ENCODE measurements at regions of chr2 and their contacts with region 1.

Region 1: DNA sequence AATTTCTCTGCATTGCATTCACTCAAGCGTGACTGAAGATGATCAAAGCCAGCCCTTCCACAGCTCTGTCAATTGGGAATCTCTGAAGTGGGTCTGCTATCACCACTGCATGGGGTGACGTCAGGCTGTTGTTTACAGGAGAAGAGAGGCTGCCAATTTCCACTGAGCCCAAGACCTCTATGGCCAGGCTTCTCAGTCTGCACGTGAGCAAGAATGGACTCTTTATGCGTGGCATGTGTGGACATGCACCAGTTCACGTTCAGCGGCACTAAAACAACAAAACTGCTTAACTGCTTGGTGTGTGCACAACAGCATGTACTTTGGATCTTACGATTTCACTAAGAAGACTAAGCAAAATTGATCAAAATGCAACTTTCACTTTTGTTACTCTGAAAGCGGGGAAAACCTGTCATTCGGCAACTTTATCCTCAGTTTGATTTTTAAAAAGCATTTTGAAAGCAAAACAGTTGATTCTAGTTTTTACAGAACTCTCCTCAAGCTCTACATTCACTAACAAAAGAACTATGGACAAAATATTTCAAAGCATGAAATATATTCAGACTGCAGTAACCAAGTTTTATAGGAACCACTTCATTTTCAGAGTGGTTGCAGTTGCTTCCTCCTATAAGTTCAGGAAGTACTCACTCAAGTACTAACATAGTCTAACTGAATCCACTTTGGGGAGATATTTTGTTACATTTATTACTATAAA is 77.0 kb upstream of the SERTAD2 start:
- DNase-seq: peak in 8 of 9 experiments; percentile 29 to 83 (median 58)
- ATAC-seq: peak; percentile 75
- H3K4me3 ChIP-seq: peak overlapping the region; percentile 32 to 51
- H3K4me3 Mint-ChIP-seq: peak overlapping the region; percentile 87
- H3K27ac ChIP-seq: peak overlapping the region; percentile 69 to 78
- H3K27ac Mint-ChIP-seq: peak overlapping the region; percentile 99
- H3K4me1 ChIP-seq: peaks cover 43% of the 10 kb centered on the region
- H3K4me1 Mint-ChIP-seq: peaks cover 61% of the 10 kb centered on the region
- H3K27me3 ChIP-seq: no peaks in the 10 kb centered on the region
- H3K27me3 Mint-ChIP-seq: no peaks in the 10 kb centered on the region
- CTCF ChIP-seq: no peak

Region 2: DNA sequence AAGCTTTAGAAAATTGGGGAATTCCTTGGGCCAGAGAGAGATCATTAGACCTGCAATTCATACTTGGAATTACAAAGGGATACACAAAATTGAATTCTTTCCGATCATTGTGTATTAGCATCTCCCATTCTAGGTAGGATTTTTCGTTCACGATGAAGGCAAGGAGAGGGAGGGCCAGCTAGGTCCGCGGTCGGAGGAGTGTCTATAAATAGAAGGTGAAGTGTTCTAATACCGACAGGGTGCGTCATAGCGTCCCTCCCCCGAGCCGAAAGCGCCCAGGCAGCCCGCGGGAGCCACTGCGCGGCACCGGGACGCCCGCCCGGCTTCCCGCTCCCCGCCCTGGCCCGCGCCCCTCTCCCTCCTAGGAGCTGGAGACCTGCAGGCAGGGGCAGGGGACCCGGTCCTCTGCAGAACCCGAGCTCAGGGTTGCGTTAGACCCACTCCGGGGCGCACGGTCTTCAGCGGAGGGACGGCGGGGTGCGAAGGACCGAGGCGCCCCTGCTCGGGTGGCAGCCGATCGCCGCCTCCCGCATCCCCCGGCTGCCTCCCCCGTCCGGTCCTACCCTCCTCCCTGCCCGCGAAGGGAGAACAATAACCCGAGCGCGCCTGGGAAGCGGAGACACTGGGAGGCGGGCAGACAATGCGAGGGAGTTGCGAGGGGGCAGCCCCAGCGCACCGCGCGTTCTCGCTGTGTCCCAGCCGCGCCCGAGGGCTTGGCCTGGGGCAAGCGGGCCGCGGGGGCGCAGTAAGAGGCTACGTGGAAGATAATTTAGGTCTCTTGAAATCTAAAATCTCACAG is 37.2 kb after region 1 on chr2:
- CTCF ChIA-PET with region 1: no interaction called
- POLR2A ChIA-PET with region 1: no interaction called
- intact Hi-C with region 1: loop called in 1 of 2 experiments (anchors 5 kb)
- DNase-seq: peak; percentile 45 to 90 (median 74)
- ATAC-seq: peak; percentile 74
- H3K4me3 ChIP-seq: peak overlapping the region; percentile 66 to 68
- H3K4me3 Mint-ChIP-seq: peak overlapping the region; percentile 92
- H3K27ac ChIP-seq: peak overlapping the region; percentile 61 to 88
- H3K27ac Mint-ChIP-seq: peak overlapping the region; percentile 93
- H3K4me1 ChIP-seq: peaks cover 11% of the 10 kb centered on the region
- H3K4me1 Mint-ChIP-seq: peaks cover 16% of the 10 kb centered on the region
- H3K27me3 ChIP-seq: no peaks in the 10 kb centered on the region
- H3K27me3 Mint-ChIP-seq: no peaks in the 10 kb centered on the region
- CTCF ChIP-seq: no peak